ENCODE measurements at regions of chr11 and their contacts with region 1.

Region 1: GRCh38 chr11:111454561-111455192 is 57.5 kb downstream of the BTG4 start:
- DNase-seq: peak; percentile 38
- H3K4me3 ChIP-seq: no peak overlapping the region
- H3K27ac ChIP-seq: no peak overlapping the region
- H3K27me3 ChIP-seq: peaks cover 3% of the 10 kb centered on the region
- CTCF ChIP-seq: peak; percentile 57; the same call in 1 of the 2 replicates

Region 2: GRCh38 chr11:111565114-111565720 is 110.5 kb after region 1 on chr11:
- CTCF ChIA-PET with region 1: interaction called, 20 read pairs
- POLR2A ChIA-PET with region 1: no interaction called
- DNase-seq: no peak
- H3K4me3 ChIP-seq: no peak overlapping the region
- H3K27ac ChIP-seq: no peak overlapping the region
- H3K27me3 ChIP-seq: no peaks in the 10 kb centered on the region
- CTCF ChIP-seq: peak; percentile 88

Region 3: GRCh38 chr11:111586388-111586831 is 131.7 kb after region 1 on chr11:
- CTCF ChIA-PET with region 1: interaction called, 11 read pairs
- POLR2A ChIA-PET with region 1: no interaction called
- DNase-seq: no peak
- H3K4me3 ChIP-seq: no peak overlapping the region
- H3K27ac ChIP-seq: no peak overlapping the region
- H3K27me3 ChIP-seq: no peaks in the 10 kb centered on the region
- CTCF ChIP-seq: peak; percentile 65

Measured in AG04450 (cell line).